ENCODE measurements at regions of chr6 and their contacts with region 1.

Region 1: GRCh38 chr6:29665942-29666825 is 9.3 kb downstream of the MOG start:
- DNase-seq: no peak
- ATAC-seq: peak; percentile 13
- H3K4me3 Mint-ChIP-seq: peak overlapping the region; percentile 14
- H3K27ac Mint-ChIP-seq: peak overlapping the region; percentile 99
- H3K4me1 Mint-ChIP-seq: peaks cover 73% of the 10 kb centered on the region
- H3K27me3 Mint-ChIP-seq: peaks cover 23% of the 10 kb centered on the region
- CTCF ChIP-seq: no peak

Region 2: DNA sequence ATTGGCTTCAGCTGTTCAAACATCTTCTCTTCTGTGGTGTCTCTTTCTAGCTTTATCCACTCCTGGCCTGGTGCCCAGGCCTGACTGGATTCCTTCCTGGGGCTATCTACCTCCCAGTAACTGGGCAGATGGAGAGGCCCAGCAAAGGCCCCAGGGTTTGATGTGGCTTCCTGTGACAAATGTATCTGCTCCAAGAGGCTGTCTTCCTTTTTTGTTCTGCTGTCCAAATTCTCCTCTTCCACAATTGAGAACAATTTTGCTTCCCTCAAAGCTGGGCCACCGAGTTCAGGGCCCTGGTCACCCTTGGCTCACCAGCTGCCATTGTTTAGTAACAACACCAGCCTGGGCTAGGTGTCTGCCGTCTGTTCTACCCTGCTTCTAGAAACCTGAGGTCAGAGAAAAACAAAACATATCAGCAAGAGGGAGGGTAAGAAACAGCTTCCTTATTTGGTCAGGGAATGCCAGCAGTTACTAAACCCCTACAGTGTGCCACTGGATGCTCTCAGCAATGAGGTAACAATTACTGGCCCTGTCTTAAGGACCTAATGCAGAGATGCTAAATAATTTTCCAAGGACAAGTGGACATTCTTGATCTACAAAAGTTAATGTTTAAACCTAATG is 10.9 kb after region 1 on chr6:
- CTCF ChIA-PET with region 1: interaction called, 20 read pairs
- POLR2A ChIA-PET with region 1: interaction called, 16 read pairs
- DNase-seq: no peak
- ATAC-seq: peak; percentile 80
- H3K4me3 Mint-ChIP-seq: no peak overlapping the region
- H3K27ac Mint-ChIP-seq: peak overlapping the region; percentile 95
- H3K4me1 Mint-ChIP-seq: peaks cover 48% of the 10 kb centered on the region
- H3K27me3 Mint-ChIP-seq: peaks cover 15% of the 10 kb centered on the region
- CTCF ChIP-seq: no peak

Region 3: GRCh38 chr6:29685718-29686326 is 19.6 kb after region 1 on chr6:
- CTCF ChIA-PET with region 1: interaction called, 20 read pairs
- POLR2A ChIA-PET with region 1: no interaction called
- DNase-seq: peak; percentile 84
- ATAC-seq: peak; percentile 88
- H3K4me3 Mint-ChIP-seq: no peak overlapping the region
- H3K27ac Mint-ChIP-seq: no peak overlapping the region
- H3K4me1 Mint-ChIP-seq: peaks cover 15% of the 10 kb centered on the region
- H3K27me3 Mint-ChIP-seq: peaks cover 2% of the 10 kb centered on the region; the same call in 1 of the 2 replicates
- CTCF ChIP-seq: no peak

Region 4: DNA sequence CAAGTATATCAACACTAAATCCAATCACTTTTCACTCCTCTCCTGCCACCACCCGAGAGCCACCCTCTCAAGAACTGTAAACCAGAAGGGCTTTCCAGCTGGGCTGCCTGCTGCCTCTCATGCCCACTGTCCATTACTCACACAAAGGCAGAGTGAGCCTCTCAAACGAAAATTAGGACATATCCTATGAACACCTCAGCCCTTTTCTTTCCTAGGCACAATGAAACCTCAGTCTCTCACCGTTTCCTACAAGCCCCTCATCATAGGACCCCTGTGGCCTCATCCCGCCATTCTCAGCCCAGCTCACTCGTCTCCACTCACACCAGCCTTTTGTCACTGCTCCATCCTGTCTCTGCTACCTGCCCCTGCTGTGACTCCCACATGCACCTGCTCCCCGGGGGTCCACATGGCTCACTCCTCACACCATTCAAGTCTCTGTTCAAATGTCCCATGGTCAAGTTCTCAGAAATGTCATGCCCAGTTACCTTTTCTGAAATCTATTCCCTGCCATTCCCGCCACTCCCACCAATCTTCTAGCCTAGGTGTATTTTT is 64.5 kb after region 1 on chr6:
- CTCF ChIA-PET with region 1: no interaction called
- POLR2A ChIA-PET with region 1: no interaction called
- DNase-seq: no peak
- ATAC-seq: no peak
- H3K4me3 Mint-ChIP-seq: no peak overlapping the region
- H3K27ac Mint-ChIP-seq: no peak overlapping the region
- H3K4me1 Mint-ChIP-seq: no peaks in the 10 kb centered on the region
- H3K27me3 Mint-ChIP-seq: peaks cover 61% of the 10 kb centered on the region
- CTCF ChIP-seq: no peak

Region 5: DNA sequence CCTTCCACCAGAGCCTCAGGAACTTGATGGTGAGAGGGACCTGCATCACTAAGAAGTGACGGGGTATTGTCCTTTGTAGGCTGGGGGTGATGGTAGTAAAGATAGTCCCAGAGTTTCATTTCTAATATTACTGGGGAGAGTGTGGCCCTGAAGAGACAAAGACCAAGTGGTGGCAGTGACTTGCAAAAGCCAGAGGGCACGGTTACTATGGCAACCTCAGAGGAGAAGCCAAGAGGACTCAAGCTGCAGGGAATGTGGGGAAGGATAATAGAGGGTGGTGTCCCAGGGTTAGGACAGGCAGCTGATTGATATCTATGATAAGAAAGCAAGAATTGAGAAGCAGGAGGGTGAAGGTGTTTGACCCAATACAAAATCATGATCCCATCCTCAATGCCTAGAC is 203.9 kb after region 1 on chr6:
- CTCF ChIA-PET with region 1: no interaction called
- POLR2A ChIA-PET with region 1: no interaction called
- DNase-seq: no peak
- ATAC-seq: no peak
- H3K4me3 Mint-ChIP-seq: no peak overlapping the region
- H3K27ac Mint-ChIP-seq: no peak overlapping the region
- H3K4me1 Mint-ChIP-seq: no peaks in the 10 kb centered on the region
- H3K27me3 Mint-ChIP-seq: peaks cover 86% of the 10 kb centered on the region
- CTCF ChIP-seq: no peak

Measured in WTC11 (cell line).